Lower leg skin (tissue), 4 donors: ENCODE measurements at regions of chr5 and their contacts with region 1.

Region 1: DNA sequence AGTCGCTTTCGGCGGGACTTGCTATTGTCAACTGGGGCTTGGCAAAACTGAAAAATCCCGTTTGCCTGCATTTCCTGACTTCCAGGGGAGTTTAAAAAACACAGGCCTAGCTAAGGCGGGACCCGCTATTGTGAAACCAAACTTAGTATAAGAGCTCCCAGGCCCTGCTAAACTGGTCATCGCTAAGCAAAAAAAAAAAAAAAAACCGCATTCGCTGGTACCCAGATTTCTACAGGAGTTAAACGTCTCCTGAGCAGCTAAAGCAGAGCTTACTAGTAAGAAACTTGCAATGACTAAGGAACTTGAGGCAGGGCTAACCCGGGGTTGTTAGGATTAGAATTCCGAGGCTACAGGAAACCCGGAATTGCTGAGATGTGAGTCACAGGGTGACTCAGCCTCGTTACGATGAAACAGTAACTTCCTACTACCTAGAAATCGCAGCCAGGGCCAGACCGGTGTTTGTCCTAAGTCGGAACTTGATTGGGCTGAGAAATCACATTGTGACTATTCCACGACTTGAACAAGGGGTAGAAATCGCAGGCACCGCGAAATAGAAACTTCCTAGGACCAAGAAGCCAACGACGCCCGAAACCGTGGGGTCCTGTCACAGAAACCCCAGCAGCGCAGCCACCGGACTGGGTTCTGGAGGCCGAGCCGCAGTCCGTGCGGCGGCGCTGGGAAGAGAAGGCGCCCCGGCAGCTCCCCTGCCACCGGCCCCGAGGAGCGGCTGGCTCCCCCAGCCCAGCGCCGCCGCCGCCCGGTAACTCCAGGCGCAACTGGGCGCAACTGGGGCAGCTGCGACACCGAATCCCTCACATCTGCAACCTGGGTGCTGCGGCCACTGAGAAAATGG is 89.5 kb downstream of the ANXA2R start:
- DNase-seq: peak; percentile 81 to 94
- H3K4me3 ChIP-seq: peak overlapping the region; percentile 28
- CTCF ChIP-seq: no peak
- POLR2A ChIP-seq: no peak

Region 2: DNA sequence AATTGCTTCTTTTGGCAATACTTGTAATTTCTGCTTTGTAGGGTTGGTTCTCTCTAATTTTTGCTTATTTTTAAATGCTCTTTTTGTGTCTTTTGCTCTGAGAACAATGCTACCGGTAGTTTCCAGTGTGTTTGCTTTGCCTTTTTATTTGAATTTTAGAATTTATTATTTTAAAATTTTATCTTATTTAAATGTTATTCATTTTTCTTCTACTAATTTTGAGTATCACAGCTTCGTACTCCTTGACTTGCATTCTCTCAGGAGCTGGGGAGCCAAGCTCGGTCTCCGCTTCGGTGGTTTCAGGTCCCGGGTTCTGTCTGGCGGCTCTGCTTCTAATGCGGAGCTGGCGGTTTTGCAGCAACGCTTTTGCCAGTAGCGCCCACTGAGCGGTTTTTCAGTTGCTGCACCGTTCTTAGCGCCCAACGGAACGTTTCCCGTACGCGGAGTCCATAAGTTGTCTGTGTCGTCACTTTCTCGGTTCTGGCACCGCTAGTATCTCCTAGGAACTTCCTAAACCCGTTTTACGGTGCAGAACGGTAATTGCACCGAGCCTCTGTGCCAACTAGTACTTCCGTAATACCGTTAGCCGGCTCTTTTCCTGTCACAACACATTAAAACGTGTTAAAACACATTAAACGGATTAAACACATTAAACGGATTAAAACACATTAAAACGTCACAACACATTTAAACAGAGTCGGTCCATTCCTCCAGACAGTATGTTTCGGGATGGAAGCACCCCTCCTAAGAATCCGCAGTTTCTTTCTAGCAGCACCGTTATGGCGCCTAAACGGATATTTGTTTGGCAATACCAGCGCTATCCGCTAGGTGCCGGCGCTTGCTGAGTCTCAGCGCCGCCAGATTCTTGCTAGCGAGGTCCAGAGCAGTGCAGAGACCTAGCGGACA is 43.8 kb after region 1 on chr5:
- intact Hi-C with region 1: loop called (anchors 1 kb)
- DNase-seq: peak; percentile 87 to 97
- H3K4me3 ChIP-seq: peak overlapping the region; percentile 24
- CTCF ChIP-seq: peak in 1 of 3 donors; percentile 76
- POLR2A ChIP-seq: no peak